Transverse colon (tissue), 4 donors: ENCODE measurements at regions of chr6 and their contacts with region 1.

Region 1: DNA sequence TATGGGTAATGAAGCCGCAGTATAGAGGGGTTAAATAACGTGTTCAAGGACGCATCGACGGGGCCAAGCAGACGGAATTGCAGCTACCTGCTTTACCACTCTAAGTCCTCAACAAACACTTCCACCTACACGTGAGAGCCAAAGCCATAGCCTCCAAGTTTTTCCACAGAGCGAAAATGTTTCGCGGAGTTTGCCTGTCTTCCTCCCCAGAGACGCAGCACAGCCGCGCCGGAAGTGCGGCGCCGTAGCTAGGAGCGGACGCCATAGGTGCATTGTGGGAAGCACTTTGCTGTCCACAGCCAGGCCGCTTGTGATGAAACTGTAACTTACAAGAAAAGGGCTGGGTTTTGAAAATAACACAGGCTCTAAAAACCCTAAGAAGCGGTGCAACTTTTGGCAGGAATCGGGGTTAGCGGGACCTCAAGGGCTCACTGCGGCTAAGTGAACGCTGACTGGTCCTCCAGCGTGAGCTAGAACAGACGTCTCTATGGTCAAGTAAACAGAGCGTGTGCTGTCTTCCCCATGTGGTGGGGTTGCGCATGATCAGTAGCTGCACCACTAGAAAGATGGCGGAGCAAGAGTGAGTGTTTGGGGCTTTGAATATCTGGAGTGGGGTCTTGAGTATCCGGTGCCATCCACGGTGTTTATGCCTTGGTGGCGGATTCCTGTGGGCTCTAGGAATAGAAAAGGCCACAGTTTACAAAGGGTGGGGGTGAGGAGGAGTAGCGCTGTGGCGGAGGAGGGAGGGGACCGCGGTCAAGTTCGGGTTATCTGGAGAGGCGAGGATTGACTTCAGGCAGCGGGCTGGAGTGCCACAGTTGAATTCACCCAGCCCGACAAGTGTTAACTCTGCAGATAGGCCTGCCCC is at the start of gene RPL7L1:
- DNase-seq: peak; percentile 84
- H3K4me3 ChIP-seq: peak within 1 kb of the TSS; percentile 33 to 53 (median 48)
- H3K27ac ChIP-seq: peak within 1 kb of the TSS; percentile 86 to 95 (median 91)
- H3K4me1 ChIP-seq: peaks cover 7 to 26% (median 16%) of the 10 kb centered on the region in 4 donors
- H3K27me3 ChIP-seq: no peaks in the 10 kb centered on the region
- CTCF ChIP-seq: peak in 4 of 5 experiments; percentile 12 to 72 (median 45)
- EP300 ChIP-seq: no peak
- POLR2A ChIP-seq: peak; percentile 71
- total RNA-seq, gene RPL7L1: 27.3 to 57.1 (median 43.4) TPM

Region 2: DNA sequence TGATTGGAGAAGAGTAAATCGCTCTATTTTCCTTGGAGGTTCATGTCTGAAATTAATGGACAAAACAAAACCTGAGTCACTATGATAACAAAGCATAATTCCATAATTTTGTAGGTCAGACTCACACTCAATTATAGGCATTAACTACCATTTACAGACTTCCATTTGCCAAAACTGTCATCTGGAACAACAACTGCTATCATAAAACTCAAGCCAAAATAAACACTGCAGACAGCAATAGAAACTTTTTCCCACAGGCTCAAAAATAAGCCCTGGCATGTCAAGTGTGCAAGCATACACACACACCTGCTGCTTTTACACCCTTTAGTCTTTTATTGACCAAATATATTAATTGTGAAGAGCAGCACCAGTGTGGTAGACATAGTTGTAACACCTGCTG is 669.1 kb before region 1 on chr6:
- in situ Hi-C with region 1: no loop called
- intact Hi-C with region 1: no loop called
- DNase-seq: no peak
- H3K4me3 ChIP-seq: no peak overlapping the region
- H3K27ac ChIP-seq: no peak overlapping the region
- H3K4me1 ChIP-seq: peaks cover 0 to 7% (median 0%) of the 10 kb centered on the region in 4 donors
- H3K27me3 ChIP-seq: no peaks in the 10 kb centered on the region
- CTCF ChIP-seq: no peak
- EP300 ChIP-seq: no peak
- POLR2A ChIP-seq: no peak

Region 3: DNA sequence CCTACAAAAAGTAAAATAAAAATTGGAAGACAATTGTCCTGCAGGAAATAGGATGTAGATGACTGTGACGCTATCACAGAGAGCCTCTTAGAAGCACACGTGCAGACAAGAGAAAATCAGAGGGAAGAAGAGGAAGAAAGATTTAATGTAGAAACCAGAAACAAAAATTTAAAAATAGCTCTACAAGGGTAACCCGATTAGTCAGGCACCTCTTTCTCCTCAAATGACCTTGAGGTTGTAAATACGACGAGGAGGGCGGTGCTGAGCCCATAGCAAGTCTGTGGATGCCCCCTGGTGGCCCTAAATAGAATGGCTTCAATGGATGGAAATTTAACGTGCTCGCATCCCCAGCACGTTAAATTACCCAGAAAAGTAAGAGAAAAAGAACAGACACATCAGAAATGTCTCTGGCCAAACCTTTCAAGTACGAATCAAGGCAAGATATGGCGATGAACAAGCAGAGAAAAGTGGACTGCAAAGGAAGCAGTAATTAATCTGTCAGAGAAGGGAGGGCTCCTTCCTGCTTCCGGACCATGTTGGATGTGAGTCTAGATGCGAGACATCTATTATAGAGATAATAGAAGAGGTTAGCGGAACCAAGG is 153.0 kb before region 1 on chr6:
- in situ Hi-C with region 1: loop called in 2 of 4 experiments (anchors 25 kb)
- intact Hi-C with region 1: loop called (anchors 10 kb)
- DNase-seq: peak; percentile 79
- H3K4me3 ChIP-seq: peak overlapping the region; percentile 15 to 59 (median 36)
- H3K27ac ChIP-seq: peak overlapping the region; percentile 76 to 85 (median 82)
- H3K4me1 ChIP-seq: peaks cover 7 to 22% (median 13%) of the 10 kb centered on the region in 4 donors
- H3K27me3 ChIP-seq: no peaks in the 10 kb centered on the region
- CTCF ChIP-seq: peak; percentile 90 to 97 (median 95)
- EP300 ChIP-seq: no peak
- POLR2A ChIP-seq: no peak

Region 4: DNA sequence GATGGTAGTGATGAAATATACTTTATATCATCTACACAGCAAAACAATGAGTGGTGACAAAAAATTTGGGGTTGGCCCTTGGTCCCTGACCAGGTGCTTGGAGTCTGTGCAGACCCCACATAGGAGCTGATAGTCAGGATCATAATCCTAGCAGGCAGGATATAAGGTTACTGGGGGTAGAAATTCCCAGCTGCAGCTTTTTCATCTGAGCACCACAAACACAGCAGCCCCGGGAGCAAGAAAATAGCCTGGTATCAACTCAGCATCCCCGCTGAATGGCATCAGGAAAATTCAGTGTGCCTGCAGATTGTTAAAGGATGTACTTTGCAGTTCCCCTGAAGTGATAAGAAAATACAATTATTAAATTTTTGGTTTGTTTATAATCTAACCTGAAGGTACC is 28.0 kb before region 1 on chr6:
- in situ Hi-C with region 1: no loop called
- intact Hi-C with region 1: no loop called
- DNase-seq: no peak
- H3K4me3 ChIP-seq: no peak overlapping the region
- H3K27ac ChIP-seq: no peak overlapping the region
- H3K4me1 ChIP-seq: peaks cover 0 to 9% (median 2%) of the 10 kb centered on the region in 4 donors
- H3K27me3 ChIP-seq: no peaks in the 10 kb centered on the region
- CTCF ChIP-seq: no peak
- EP300 ChIP-seq: no peak
- POLR2A ChIP-seq: no peak